OCI-LY7 (cell line): ENCODE measurements at regions of chr10 and their contacts with region 1.

Region 1: DNA sequence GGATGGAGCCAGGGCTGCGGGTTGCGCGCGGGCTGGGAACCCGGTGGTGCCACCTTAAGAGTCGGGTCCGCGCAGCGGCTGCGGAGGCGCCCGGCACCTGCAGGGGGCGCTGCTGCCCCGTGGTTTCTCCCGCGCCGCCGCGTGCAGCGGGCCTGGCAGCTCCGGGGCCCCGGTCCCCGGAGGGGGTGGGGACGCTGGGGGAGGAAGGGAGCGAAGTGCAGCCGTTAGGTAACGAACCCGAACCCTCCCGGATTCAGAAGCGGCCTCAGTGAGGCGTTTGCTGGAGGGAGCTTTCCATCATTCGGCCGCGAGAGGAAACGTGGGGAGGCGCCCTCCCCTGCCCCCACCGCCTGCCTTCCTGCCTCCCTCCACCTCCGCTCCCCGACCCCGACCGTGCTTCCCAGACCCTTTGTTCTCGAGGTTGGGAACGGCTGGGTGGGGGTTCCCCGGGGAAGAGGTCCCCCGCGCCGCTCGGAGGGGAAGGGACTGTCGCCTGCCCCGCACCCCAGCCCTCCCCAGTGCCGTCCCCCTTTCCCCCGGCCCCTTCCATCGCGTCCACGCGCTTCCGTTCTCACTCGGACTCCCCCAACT is 29.6 kb downstream of the SKIDA1 start:
- DNase-seq: peak; percentile 87
- H3K4me3 ChIP-seq: peak overlapping the region; percentile 77
- H3K27ac ChIP-seq: peak overlapping the region; percentile 45
- H3K4me1 ChIP-seq: peaks cover 13% of the 10 kb centered on the region
- CTCF ChIP-seq: peak; percentile 90

Region 2: GRCh38 chr10:21278491-21279239 is 217.2 kb before region 1 on chr10:
- CTCF ChIA-PET with region 1: no interaction called
- POLR2A ChIA-PET with region 1: interaction called, 4 read pairs
- intact Hi-C with region 1: loop called (anchors 5 kb)
- DNase-seq: peak; percentile 57
- H3K4me3 ChIP-seq: no peak overlapping the region
- H3K27ac ChIP-seq: no peak overlapping the region
- H3K4me1 ChIP-seq: no peaks in the 10 kb centered on the region
- CTCF ChIP-seq: peak; percentile 80

Region 3: DNA sequence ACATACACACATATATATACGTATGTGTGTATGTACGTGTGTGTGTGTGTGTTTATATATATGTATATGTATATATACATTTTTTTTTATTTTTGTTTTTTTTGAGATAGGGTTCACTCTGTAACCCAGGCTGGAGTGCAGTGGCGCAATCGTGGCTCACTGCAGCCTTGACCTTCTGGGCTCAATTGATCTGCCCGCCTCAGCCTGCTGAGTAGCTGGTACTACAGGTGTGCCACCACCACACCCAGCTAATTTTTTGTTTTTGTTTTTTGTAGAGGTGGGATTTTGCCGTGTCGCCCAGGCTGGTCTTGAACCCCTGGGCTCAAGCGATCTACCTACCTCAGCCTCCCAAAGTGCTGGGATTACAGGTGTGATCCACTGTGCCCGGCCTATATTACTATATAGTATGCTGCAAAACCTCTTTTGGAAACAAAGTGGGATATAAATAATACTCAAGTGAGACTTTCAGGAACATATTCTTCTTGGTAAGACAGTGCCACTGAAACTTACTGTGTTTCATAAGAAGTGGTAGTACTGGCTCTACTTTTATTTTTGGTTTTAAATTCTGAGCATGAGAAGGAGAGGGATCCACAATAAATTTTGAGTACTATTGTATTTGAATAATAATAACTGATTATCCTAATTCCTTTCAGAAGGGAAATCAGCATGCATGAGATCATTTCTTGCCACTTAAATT is 89.1 kb after region 1 on chr10:
- CTCF ChIA-PET with region 1: no interaction called
- POLR2A ChIA-PET with region 1: no interaction called
- intact Hi-C with region 1: no loop called
- DNase-seq: no peak
- H3K4me3 ChIP-seq: no peak overlapping the region
- H3K27ac ChIP-seq: no peak overlapping the region
- H3K4me1 ChIP-seq: no peaks in the 10 kb centered on the region
- CTCF ChIP-seq: no peak

Region 4: DNA sequence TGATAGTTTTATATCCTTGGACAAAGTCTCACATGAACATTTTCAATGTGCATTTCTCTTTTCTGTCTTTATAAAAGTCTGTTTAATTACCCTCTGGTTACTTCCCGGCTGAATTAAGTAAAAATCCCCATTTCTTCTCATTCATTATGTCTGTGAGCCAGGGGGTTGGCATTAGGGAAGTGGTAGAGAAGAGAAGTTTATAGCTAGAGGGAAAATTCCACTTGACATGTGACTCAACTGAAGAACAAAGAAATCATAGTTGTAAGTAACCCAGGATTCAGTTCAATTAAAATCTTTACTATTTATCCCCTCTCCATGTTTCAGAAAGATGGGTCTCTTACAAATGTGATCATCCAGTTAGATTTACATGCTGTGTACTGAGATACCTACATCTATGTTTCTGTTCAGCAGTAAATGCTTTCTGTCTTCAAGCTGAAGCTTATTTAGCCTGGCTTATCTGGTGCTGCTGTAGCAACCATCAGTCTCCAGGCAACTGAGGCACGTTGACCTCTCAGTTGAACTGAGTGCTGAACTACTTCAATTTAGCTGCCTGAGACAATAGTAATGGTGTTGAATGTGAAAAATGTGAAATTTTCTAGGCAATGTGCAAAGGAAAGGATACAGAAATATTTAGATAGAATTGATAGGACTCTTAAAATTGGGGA is 219.8 kb after region 1 on chr10:
- CTCF ChIA-PET with region 1: no interaction called
- POLR2A ChIA-PET with region 1: no interaction called
- intact Hi-C with region 1: no loop called
- DNase-seq: no peak
- H3K4me3 ChIP-seq: no peak overlapping the region
- H3K27ac ChIP-seq: no peak overlapping the region
- H3K4me1 ChIP-seq: no peaks in the 10 kb centered on the region
- CTCF ChIP-seq: no peak

Region 5: DNA sequence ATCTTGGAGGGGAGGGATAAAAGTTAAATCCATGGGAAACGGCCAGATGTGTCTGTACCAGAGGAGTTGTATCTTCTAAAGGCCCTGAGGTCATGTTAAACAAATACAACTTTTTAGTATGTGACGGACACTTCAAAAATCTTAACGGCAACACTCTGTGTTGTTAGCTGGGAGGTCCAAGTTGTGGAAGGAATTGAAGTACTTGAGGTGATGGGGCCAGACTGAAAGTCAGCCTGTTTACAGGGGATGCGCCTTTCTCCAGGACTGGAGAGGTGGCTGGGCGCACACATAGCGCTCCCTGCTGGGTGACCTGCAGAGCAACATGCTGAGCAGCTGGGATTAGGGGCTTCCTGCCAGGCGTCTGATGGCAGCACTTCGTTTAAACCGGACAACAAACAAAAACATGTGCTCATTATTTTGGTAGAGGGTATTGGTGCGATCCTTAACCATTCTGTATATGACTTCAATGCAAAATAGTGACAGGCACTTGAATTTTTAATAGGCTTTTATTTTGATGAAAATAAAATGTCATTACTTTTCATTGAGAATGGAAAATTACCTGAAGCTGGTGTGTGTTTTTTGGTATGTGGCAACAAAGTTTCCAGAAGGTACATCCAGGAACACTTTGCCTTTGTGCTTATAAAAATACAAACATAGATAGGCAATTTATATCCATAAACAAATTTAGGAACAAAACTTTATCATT is 236.4 kb after region 1 on chr10:
- CTCF ChIA-PET with region 1: no interaction called
- POLR2A ChIA-PET with region 1: interaction called, 5 read pairs
- intact Hi-C with region 1: loop called (anchors 1 kb)
- DNase-seq: peak; percentile 57
- H3K4me3 ChIP-seq: no peak overlapping the region
- H3K27ac ChIP-seq: no peak overlapping the region
- H3K4me1 ChIP-seq: no peaks in the 10 kb centered on the region
- CTCF ChIP-seq: peak; percentile 87

Region 6: GRCh38 chr10:22228943-22229801 is 733.3 kb after region 1 on chr10:
- CTCF ChIA-PET with region 1: no interaction called
- POLR2A ChIA-PET with region 1: no interaction called
- intact Hi-C with region 1: loop called (anchors 10 kb)
- DNase-seq: peak; percentile 86
- H3K4me3 ChIP-seq: peak overlapping the region; percentile 77
- H3K27ac ChIP-seq: peak overlapping the region; percentile 34
- H3K4me1 ChIP-seq: peaks cover 6% of the 10 kb centered on the region
- CTCF ChIP-seq: no peak